Common myeloid progenitor, CD34-positive (primary cell): ENCODE measurements at regions of chr3 and their contacts with region 1.

Region 1: GRCh38 chr3:10758304-10759061 is 57.5 kb upstream of the SLC6A11 start:
- DNase-seq: peak; percentile 65 to 84 (median 78)
- H3K4me3 ChIP-seq: no peak overlapping the region
- H3K27ac ChIP-seq: no peak overlapping the region
- H3K4me1 ChIP-seq: no peaks in the 10 kb centered on the region
- H3K27me3 ChIP-seq: peaks cover 0 to 37% (median 9%) of the 10 kb centered on the region in 5 experiments

Region 2: GRCh38 chr3:10445561-10446175 is 312.8 kb before region 1 on chr3:
- CTCF ChIA-PET with region 1: no interaction called
- POLR2A ChIA-PET with region 1: no interaction called
- DNase-seq: no peak
- H3K4me3 ChIP-seq: no peak overlapping the region
- H3K27ac ChIP-seq: no peak overlapping the region
- H3K4me1 ChIP-seq: no peaks in the 10 kb centered on the region
- H3K27me3 ChIP-seq: peaks cover 0 to 11% (median 7%) of the 10 kb centered on the region in 5 experiments

Region 3: DNA sequence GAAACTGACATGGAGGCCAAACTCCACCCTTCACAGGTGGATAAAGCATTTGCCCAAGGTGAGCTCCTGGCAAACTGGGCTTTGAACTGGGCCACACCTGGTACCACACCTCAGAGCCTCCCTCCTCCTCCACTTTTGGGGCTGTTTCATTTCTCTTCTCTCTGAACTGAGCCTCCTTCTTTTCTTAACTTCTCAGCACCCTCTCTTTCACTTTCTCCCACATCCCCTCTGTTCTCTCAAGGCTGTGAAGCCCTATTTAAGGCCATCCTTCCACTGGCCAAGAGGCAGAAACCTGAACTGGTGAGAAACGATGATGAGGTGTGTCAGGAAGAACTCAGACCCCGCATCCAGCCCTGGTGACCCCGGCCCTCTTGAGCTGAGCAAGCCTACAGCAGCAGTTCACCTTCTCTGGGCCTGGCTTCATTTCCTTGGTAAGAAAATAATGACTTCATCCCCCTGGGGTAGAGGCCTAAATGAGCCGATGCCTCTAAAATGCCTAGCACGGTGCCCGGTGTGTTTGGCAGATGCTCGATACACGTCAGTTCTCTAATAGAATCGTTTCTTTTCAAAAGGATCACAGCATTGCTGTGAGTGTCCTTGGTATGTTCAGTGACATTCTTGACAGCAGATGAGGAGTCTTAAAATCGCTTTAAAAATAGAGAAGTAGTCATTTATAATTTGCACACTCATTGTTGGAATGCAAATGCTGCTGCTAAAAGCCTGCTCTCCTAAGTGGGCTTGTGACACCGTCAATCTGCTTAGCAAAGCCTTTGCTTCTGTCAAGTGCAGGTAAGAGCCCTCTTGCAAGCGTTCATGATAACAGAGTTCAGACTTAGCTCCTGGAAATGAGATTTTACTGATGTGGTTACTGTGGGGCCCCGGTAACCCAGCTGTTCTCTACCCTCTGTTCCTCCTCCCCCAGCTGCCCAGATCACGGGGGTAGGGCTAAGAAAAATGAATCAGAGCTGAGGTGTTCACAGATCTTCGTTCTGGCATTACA is 155.4 kb before region 1 on chr3:
- CTCF ChIA-PET with region 1: no interaction called
- POLR2A ChIA-PET with region 1: no interaction called
- DNase-seq: peak; percentile 15 to 78 (median 71)
- H3K4me3 ChIP-seq: no peak overlapping the region
- H3K27ac ChIP-seq: no peak overlapping the region
- H3K4me1 ChIP-seq: peaks cover 0 to 11% (median 5%) of the 10 kb centered on the region in 4 experiments
- H3K27me3 ChIP-seq: peaks cover 0 to 13% (median 2%) of the 10 kb centered on the region in 5 experiments

Region 4: GRCh38 chr3:10655105-10655504 is 103.4 kb before region 1 on chr3:
- CTCF ChIA-PET with region 1: no interaction called
- POLR2A ChIA-PET with region 1: no interaction called
- DNase-seq: no peak
- H3K4me3 ChIP-seq: no peak overlapping the region
- H3K27ac ChIP-seq: no peak overlapping the region
- H3K4me1 ChIP-seq: no peaks in the 10 kb centered on the region
- H3K27me3 ChIP-seq: peaks cover 0 to 5% (median 2%) of the 10 kb centered on the region in 5 experiments

Region 5: DNA sequence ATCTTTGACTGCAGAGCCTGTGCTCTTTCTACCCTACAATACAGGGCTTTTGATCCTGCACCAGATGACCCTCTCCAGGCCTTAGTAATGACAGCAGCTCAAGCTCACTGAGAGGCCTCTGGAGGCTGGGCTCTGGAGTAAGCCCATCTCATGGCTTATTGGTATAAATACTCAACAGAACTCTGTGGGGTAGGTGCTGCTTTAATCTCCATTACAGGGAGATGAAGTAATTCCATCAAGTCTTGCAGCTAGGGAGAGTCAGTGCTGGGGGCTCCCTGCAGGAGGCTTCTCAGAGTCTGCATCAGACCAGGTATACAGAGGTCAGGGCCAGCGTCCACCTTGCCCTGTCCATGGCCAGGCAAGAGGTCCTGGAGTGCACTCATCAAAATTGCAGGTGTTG is 31.7 kb before region 1 on chr3:
- CTCF ChIA-PET with region 1: no interaction called
- POLR2A ChIA-PET with region 1: no interaction called
- DNase-seq: no peak
- H3K4me3 ChIP-seq: no peak overlapping the region
- H3K27ac ChIP-seq: no peak overlapping the region
- H3K4me1 ChIP-seq: no peaks in the 10 kb centered on the region
- H3K27me3 ChIP-seq: peaks cover 0 to 22% (median 3%) of the 10 kb centered on the region in 5 experiments

Region 6: GRCh38 chr3:10738688-10739372 is 19.7 kb before region 1 on chr3:
- CTCF ChIA-PET with region 1: interaction called, 37 read pairs
- POLR2A ChIA-PET with region 1: no interaction called
- DNase-seq: peak; percentile 57 to 76 (median 75)
- H3K4me3 ChIP-seq: peak overlapping the region; percentile 3 to 74 (median 49)
- H3K27ac ChIP-seq: no peak overlapping the region
- H3K4me1 ChIP-seq: peaks cover 0 to 8% (median 2%) of the 10 kb centered on the region in 4 experiments
- H3K27me3 ChIP-seq: peaks cover 2 to 31% (median 11%) of the 10 kb centered on the region in 5 experiments

Region 7: DNA sequence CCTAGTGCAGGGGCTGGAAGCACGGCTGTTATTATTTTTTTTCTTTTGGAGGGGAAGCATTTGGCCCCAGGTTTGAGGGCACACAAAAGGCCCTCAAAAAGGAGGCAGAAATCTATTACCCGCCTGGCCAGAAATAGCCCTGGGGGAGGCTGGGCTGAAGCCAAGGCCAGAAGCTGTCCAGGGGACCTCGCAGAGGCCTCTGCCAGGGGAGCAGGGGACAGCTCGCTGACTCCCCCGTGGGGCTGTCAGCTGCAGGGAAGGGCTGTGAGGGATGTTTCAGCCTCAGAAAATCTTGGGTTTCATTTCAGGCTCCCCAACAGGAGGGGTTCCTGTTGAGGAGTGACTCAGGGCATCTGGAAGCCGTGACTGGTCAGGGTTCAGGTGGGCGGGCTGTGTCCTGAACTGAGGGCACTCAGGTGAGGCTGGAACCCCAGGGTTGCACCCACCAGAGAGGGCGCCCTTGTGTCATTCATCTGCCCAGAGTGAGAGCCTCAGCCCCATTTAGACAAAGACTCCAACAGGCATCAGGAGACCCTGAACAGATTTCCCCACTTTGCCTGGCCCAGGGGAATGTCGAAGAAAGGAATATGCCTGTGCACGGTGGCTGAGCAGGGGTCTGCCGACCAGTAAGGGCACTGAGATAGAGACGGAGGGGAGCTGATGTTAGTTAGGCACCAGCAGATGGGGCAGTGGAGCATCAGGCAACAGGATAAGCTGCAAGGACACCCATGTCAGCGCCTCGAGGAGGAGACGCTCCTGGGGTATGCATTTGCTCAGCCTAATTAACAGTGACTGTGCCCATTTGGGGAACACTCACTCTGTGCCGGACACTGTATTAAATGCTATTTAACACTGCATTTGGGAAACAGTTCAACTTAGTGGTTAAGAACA is 14.0 kb after region 1 on chr3:
- CTCF ChIA-PET with region 1: interaction called, 21 read pairs
- POLR2A ChIA-PET with region 1: no interaction called
- DNase-seq: peak; percentile 16 to 39 (median 19)
- H3K4me3 ChIP-seq: no peak overlapping the region
- H3K27ac ChIP-seq: no peak overlapping the region
- H3K4me1 ChIP-seq: peaks cover 0 to 4% (median 0%) of the 10 kb centered on the region in 4 experiments
- H3K27me3 ChIP-seq: peaks cover 3 to 22% (median 5%) of the 10 kb centered on the region in 5 experiments

Region 8: GRCh38 chr3:10883478-10884234 is 125.2 kb after region 1 on chr3:
- CTCF ChIA-PET with region 1: interaction called, 88 read pairs
- POLR2A ChIA-PET with region 1: no interaction called
- DNase-seq: peak; percentile 25 to 48 (median 45)
- H3K4me3 ChIP-seq: no peak overlapping the region
- H3K27ac ChIP-seq: no peak overlapping the region
- H3K4me1 ChIP-seq: peaks cover 0 to 5% (median 2%) of the 10 kb centered on the region in 4 experiments
- H3K27me3 ChIP-seq: peaks cover 0 to 2% (median 0%) of the 10 kb centered on the region in 5 experiments